GM13977 (cell line): ENCODE measurements at regions of chr11 and their contacts with region 1.

Region 1: GRCh38 chr11:41461057-41461681 is 1.7 kb upstream of the LRRC4C start:
- DNase-seq: no peak
- CTCF ChIP-seq: peak; percentile 61

Region 2: GRCh38 chr11:41134971-41135370 is 326.2 kb before region 1 on chr11:
- in situ Hi-C with region 1: no loop called
- DNase-seq: no peak
- CTCF ChIP-seq: no peak

Region 3: GRCh38 chr11:42524534-42525227 is 1063.5 kb after region 1 on chr11:
- in situ Hi-C with region 1: loop called (anchors 25 kb)
- DNase-seq: peak; percentile 46
- CTCF ChIP-seq: peak; percentile 87